Activated B cell treated with CpG ODN at 0.5 μM for 24 hours (primary cell): ENCODE measurements at regions of chr4 and their contacts with region 1.

Region 1: DNA sequence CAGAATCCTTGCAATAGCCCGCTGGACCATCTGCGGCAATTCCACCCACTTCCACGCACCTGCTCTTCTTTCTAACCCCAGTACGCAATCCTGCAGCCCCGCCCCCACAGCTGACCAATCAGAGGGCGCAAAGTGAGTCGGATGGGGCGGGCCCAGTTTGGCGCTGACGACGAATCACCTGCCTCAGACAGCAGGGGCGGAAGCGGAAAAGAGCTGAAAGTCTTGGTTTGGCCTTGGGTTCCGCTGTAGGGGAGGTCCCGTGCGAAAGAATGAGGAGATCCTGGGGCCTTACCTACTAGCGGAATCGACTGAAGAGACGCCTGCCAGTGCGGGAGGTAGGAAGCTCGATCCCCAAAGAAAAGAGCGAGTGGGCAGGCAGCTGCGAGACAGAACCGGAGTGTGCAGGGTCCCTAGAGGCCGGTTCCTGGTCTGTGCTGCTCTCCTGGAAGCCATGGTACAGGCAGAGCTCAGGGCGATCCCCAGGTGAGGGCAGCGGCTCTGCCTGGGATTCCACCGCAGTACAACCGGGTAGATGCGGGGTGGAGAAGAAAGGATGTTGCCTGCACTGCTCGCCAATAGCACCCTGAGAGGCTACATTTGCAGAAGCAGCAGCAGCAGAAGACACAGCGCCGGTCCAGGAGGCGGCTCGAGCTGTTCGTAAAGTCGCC is at the start of gene TMEM184C:
- DNase-seq: peak; percentile 97
- ATAC-seq: peak; percentile 97
- H3K4me3 Mint-ChIP-seq: peak within 1 kb of the TSS; percentile 98
- H3K27ac Mint-ChIP-seq: peak within 1 kb of the TSS; percentile 96
- H3K4me1 Mint-ChIP-seq: peaks cover 44% of the 10 kb centered on the region
- H3K27me3 Mint-ChIP-seq: peaks cover 2% of the 10 kb centered on the region
- CTCF ChIP-seq: no peak
- total RNA-seq, gene TMEM184C: 25.0 and 27.9 TPM in 2 replicates

Region 2: DNA sequence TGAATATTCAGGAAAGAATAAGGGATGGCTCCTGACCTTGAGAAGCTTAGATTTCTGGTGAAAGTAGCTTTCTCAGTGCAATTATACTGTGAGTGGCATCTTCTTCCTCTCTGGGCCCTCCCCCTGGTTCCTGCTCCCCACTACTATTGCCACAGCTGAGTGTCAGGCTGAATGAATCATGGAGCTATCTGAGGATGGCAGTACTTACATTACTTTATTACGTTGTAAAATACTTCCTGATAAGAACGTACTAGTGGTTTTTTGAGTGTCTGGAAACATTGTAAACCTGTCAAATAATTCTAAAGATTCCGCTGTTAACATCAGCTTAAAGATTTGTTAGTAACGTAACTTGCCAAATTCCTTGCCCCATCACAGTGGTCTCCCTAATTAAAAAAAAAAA is 150.8 kb after region 1 on chr4:
- CTCF ChIA-PET with region 1: no interaction called
- POLR2A ChIA-PET with region 1: no interaction called
- intact Hi-C with region 1: no loop called
- DNase-seq: no peak
- ATAC-seq: no peak
- H3K4me3 Mint-ChIP-seq: no peak overlapping the region
- H3K27ac Mint-ChIP-seq: no peak overlapping the region
- H3K4me1 Mint-ChIP-seq: no peaks in the 10 kb centered on the region
- H3K27me3 Mint-ChIP-seq: no peaks in the 10 kb centered on the region
- CTCF ChIP-seq: no peak

Region 3: DNA sequence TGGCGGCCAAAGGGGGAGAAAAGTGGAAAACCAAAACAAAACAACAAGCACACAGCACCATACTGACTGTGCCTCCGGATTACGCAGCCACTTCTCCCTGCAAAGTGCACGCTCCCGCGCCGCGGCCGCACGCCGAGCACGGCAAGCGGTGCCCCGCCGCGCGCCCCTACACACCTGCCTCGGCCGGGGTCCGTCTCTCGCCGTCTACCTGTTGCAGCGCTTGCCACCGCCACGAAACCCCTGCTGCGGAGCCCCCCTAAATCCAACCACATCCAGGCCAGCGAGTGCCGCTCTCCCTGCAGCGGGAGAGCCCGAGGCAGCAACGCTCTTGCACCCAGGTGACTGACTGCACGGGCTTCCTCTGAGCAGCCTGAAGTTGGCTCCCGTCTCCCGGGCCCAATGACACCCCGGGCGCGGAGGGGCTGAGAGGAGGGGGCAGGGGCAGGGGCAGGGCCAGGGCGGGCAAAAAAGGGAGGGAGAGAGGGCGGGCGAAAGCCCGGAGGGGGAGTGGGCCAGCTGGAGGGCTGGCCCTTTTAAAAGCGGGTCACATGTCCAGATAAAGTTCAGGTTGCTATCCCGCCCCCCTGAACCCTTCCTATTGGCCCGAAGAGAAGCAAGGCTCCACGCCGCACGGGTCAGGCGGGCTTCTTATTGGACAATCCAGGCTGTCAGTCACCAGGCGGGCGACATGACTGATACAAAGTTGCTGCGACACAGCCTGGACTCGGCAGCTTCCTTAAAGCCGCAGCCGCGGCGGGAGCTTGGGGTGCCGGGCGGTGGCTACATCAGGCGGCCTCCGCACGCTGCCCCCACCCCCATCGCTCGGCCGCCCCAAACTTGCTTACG is 824.9 kb after region 1 on chr4 and contains the start of gene NR3C2:
- CTCF ChIA-PET with region 1: no interaction called
- POLR2A ChIA-PET with region 1: interaction called, 8 read pairs
- intact Hi-C with region 1: loop called (anchors 5 kb)
- DNase-seq: peak; percentile 81
- ATAC-seq: peak; percentile 83
- H3K4me3 Mint-ChIP-seq: peak within 1 kb of the TSS; percentile 92
- H3K27ac Mint-ChIP-seq: peak within 1 kb of the TSS; percentile 97
- H3K4me1 Mint-ChIP-seq: peaks cover 33% of the 10 kb centered on the region
- H3K27me3 Mint-ChIP-seq: peaks cover 2% of the 10 kb centered on the region
- CTCF ChIP-seq: no peak
- total RNA-seq, gene NR3C2: 3.9 and 4.5 TPM in 2 replicates